Colonic mucosa (tissue), 4 donors: ENCODE measurements at regions of chr5 and their contacts with region 1.

Region 1: GRCh38 chr5:139787568-139788293 is 7.9 kb upstream of the PSD2 start:
- DNase-seq: peak; percentile 89
- H3K4me3 ChIP-seq: peak overlapping the region; percentile 51
- H3K27ac ChIP-seq: no peak overlapping the region
- H3K4me1 ChIP-seq: no peaks in the 10 kb centered on the region
- H3K27me3 ChIP-seq: peaks cover 4% of the 10 kb centered on the region
- CTCF ChIP-seq: peak; percentile 93

Region 2: DNA sequence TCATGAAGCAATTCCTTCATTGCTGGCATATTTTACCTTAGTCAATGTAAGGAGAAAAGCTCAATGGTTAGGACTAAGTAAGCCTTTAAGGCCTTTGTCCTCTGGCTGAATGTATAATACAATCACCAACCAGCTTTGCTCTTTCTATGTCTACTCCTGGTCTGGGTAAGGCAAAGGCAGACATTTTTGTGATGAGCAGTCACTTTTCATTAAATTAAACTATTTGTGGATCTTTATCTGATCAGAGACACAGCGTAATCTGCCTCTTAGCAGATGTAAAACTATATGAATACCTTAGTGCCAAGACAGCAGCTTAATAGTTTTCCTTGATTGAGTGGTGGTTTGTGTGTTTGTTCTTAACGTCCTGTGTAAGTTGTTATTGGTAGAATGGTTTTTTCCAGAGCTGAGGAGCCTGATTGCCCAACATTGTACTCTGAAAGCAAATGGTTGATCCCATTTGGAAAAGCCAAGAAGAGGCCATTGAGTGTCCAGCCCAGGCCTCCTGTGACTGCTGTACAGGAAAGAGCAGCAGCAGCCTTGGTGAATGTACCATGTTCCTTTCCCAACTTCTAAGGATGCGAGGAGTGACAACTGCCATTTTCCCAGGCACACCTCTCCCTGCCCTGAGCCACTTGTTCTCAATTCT is 156.1 kb before region 1 on chr5:
- intact Hi-C with region 1: no loop called
- DNase-seq: no peak
- H3K4me3 ChIP-seq: no peak overlapping the region
- H3K27ac ChIP-seq: no peak overlapping the region
- H3K4me1 ChIP-seq: peaks cover 4% of the 10 kb centered on the region
- H3K27me3 ChIP-seq: no peaks in the 10 kb centered on the region
- CTCF ChIP-seq: no peak

Region 3: DNA sequence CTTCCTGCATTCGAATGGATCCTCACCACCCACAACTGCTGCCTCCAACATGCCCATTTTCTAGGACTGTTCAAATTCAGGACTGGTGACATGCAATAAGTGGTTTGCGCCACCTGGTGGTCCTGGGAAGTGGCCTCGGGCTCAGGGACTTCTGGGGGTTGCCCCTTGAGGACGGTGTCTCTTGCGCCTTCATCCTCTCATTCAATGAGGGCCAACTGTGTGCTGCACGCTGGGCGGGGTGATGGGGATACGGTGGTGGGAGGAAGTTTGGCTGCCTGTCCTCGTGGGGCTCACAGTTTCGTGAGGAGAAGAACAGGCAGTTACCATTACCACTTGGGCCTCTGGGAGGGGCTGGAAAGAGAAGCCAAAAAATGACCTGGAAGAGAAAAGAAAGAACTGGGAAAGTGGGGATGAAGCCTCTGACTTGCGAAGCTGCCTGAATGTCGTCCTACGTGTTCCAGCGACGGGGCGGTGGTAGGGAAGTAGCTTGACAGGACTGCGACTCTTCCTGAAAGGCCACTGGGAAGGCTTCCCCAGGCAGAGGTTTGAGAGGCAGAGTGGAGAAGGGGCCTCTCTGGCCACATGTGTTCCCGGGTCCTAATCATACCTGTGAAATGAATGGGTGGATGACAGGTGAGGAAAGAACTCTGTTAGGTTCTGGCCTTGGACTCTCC is 56.9 kb after region 1 on chr5:
- intact Hi-C with region 1: loop called (anchors 5 kb)
- DNase-seq: peak; percentile 62
- H3K4me3 ChIP-seq: no peak overlapping the region
- H3K27ac ChIP-seq: no peak overlapping the region
- H3K4me1 ChIP-seq: no peaks in the 10 kb centered on the region
- H3K27me3 ChIP-seq: peaks cover 14% of the 10 kb centered on the region
- CTCF ChIP-seq: peak; percentile 57

Region 4: GRCh38 chr5:139863855-139864558 is 76.3 kb after region 1 on chr5:
- intact Hi-C with region 1: loop called (anchors 5 kb)
- DNase-seq: peak; percentile 69
- H3K4me3 ChIP-seq: no peak overlapping the region
- H3K27ac ChIP-seq: no peak overlapping the region
- H3K4me1 ChIP-seq: no peaks in the 10 kb centered on the region
- H3K27me3 ChIP-seq: no peaks in the 10 kb centered on the region
- CTCF ChIP-seq: peak; percentile 88

Region 5: GRCh38 chr5:139968547-139969261 is 181.0 kb after region 1 on chr5:
- intact Hi-C with region 1: loop called (anchors 1 kb)
- DNase-seq: peak; percentile 86
- H3K4me3 ChIP-seq: no peak overlapping the region
- H3K27ac ChIP-seq: no peak overlapping the region
- H3K4me1 ChIP-seq: no peaks in the 10 kb centered on the region
- H3K27me3 ChIP-seq: no peaks in the 10 kb centered on the region
- CTCF ChIP-seq: peak; percentile 99

Region 6: DNA sequence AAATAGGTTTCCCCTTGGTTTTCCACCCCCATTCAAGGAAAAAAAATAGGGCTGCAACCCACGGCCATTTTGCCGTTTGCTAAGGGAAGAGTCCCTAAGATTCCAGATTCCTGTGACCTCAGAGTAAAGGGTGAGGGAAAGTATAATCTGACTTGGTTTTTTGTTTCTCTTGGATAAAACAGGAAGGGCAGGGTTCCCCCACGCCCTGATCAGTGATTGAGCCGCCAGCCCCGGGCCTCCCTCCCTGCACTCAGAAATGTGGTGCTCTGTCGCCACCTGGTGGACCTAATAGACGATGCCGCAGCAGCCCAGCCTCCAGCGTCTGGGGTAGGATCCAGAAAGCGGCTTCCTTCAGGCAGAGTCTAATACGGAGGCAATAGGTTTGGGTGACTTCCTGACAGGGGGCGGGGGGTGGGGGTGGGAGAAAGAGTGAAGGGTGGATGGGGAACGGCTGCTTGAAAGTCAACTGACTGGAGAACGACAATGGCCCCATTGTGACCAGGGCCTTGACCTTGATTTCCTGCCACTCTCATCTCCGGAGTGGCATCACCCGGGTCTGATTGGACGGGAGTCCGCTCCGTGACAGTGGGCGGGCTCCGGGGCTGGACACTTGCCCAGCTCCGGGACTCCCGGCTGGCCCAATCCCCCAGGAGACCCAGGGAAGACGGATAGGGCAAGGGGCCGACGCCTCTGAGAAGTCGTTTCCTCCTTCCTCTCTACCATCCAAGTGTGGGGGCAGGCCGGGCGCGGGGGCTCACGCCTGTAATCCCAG is 369.5 kb after region 1 on chr5:
- intact Hi-C with region 1: loop called (anchors 5 kb)
- DNase-seq: peak; percentile 93
- H3K4me3 ChIP-seq: peak overlapping the region; percentile 31
- H3K27ac ChIP-seq: no peak overlapping the region
- H3K4me1 ChIP-seq: peaks cover 3% of the 10 kb centered on the region
- H3K27me3 ChIP-seq: no peaks in the 10 kb centered on the region
- CTCF ChIP-seq: peak; percentile 87